ENCODE measurements at regions of chr1 and their contacts with region 1.

Region 1: GRCh38 chr1:115980998-115981993 is 5.0 kb downstream of the SLC22A15 start:
- DNase-seq: no peak
- H3K4me3 ChIP-seq: no peak overlapping the region
- H3K27ac ChIP-seq: no peak overlapping the region
- H3K4me1 ChIP-seq: no peaks in the 10 kb centered on the region
- H3K27me3 ChIP-seq: no peaks in the 10 kb centered on the region
- CTCF ChIP-seq: peak; percentile 51 to 62 (median 51)

Region 2: GRCh38 chr1:115807723-115808122 is 173.6 kb before region 1 on chr1:
- intact Hi-C with region 1: loop called (anchors 2 kb)
- DNase-seq: no peak
- H3K4me3 ChIP-seq: no peak overlapping the region
- H3K27ac ChIP-seq: no peak overlapping the region
- H3K4me1 ChIP-seq: no peaks in the 10 kb centered on the region
- H3K27me3 ChIP-seq: no peaks in the 10 kb centered on the region
- CTCF ChIP-seq: peak; percentile 27 to 55 (median 39)

Region 3: DNA sequence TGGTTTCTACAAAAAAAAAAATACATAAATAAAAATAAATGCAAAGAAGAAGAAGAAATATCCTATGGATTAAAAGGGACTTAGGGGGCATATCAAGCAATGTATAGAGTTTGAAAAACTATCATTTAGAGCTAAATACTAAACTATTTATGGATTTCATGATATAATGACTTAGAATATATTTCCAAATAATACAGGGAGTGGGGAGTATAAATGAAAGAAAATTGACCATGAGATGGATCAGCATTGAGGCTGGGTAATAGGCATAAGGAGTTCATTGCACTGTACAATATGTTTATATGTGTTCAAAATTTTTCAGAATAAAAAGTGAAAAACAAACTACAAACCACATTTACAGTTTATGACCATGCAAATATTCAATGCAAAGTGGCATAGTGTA is 159.2 kb before region 1 on chr1:
- intact Hi-C with region 1: no loop called
- DNase-seq: no peak
- H3K4me3 ChIP-seq: no peak overlapping the region
- H3K27ac ChIP-seq: no peak overlapping the region
- H3K4me1 ChIP-seq: no peaks in the 10 kb centered on the region
- H3K27me3 ChIP-seq: no peaks in the 10 kb centered on the region
- CTCF ChIP-seq: no peak

Region 4: GRCh38 chr1:116207126-116207735 is 225.9 kb after region 1 on chr1:
- intact Hi-C with region 1: no loop called
- DNase-seq: no peak
- H3K4me3 ChIP-seq: no peak overlapping the region
- H3K27ac ChIP-seq: no peak overlapping the region
- H3K4me1 ChIP-seq: no peaks in the 10 kb centered on the region
- H3K27me3 ChIP-seq: no peaks in the 10 kb centered on the region
- CTCF ChIP-seq: no peak

Measured in ascending aorta (tissue), 2 donors.